CD4-positive, alpha-beta memory T cell (primary cell): ENCODE measurements at regions of chr7 and their contacts with region 1.

Region 1: DNA sequence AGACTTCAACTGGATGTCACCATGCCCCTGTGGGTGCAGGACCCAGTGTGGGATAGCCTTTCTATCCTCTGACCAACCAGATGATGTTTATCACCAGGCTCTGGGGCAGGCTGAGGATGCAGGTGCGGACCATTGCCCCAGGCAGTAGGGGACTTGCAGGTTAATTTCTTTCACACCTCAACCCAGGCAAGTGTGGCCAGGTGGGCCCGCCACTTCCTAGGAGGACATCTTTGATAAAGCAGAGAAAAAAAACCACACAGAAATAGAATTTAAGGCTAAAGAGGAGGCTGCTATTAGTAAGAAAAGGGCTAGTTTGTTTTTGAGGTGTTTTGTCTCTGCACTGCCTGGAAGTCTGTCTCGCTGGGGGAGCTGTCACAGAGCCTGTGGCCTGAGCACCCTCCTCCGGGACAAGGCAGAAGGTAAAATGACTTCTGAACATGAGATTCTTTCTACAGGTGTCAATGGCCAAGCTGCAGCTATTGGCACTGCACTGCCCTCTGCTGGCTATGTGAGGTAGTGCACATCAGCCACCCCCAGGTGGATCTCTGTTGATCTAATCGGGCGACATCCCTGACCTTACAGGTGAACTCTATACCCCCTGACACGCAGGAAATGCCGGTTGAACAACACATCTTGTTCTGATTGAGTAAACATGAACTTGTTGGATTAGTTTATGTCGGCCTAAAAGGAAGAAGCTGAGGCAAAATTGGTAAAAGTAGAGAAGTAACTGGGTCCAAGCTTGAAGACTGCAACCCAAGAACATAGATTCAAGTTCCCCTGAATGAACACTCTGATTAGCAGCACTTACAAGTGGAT is 21.0 kb downstream of the UPP1 start:
- DNase-seq: peak; percentile 81 to 86 (median 84)
- H3K4me3 ChIP-seq: no peak overlapping the region
- H3K4me3 Mint-ChIP-seq: peak overlapping the region in 2 of 8 donors; percentile 2 to 13
- H3K27ac ChIP-seq: no peak overlapping the region
- H3K27ac Mint-ChIP-seq: peak overlapping the region; percentile 57 to 90 (median 85)
- H3K4me1 ChIP-seq: peaks cover 13% of the 10 kb centered on the region
- H3K4me1 Mint-ChIP-seq: peaks cover 8 to 16% (median 11%) of the 10 kb centered on the region in 4 donors
- H3K27me3 ChIP-seq: no peaks in the 10 kb centered on the region
- H3K27me3 Mint-ChIP-seq: no peaks in the 10 kb centered on the region

Region 2: DNA sequence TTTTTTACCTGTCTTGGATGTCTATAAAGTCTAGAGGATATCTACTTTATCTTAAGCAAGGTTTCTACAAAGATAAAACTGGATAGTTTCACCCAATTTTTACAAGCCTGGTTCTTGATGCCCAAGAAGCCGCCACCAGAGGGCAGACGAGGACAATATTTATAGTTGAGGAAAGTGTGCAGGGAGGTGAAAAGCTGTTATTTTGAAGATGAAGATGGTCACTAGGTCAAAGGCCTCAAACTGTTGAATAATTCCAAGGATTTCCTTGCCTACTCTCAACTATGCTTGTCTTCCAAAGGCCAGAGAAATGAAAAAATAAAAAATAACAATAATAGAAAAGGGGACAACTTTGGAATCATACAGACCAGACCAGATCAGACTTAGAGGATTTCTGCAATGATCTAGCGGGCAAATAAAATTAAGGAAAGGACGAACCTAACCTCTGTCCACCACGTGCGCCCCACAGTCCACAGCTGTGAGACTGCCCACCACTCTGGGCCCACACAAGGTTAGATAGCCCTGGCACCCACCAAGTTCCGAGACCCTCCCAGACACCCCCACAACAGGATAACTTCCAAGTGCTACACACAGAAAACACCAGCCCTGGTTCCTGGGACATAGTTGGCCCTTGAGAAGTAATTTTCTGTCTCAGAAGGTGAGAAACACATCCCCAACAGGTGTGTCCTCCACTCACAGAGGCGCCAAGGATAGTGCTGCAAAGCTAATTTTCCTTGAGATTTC is 164.6 kb before region 1 on chr7:
- CTCF ChIA-PET with region 1: interaction called, 94 read pairs
- POLR2A ChIA-PET with region 1: interaction called, 3 read pairs
- intact Hi-C with region 1: loop called (anchors 1 kb)
- DNase-seq: peak; percentile 53 to 62 (median 61)
- H3K4me3 ChIP-seq: no peak overlapping the region
- H3K4me3 Mint-ChIP-seq: no peak overlapping the region
- H3K27ac ChIP-seq: no peak overlapping the region
- H3K27ac Mint-ChIP-seq: no peak overlapping the region
- H3K4me1 ChIP-seq: no peaks in the 10 kb centered on the region
- H3K4me1 Mint-ChIP-seq: peaks cover 0 to 3% (median 0%) of the 10 kb centered on the region in 4 donors
- H3K27me3 ChIP-seq: no peaks in the 10 kb centered on the region
- H3K27me3 Mint-ChIP-seq: no peaks in the 10 kb centered on the region

Region 3: DNA sequence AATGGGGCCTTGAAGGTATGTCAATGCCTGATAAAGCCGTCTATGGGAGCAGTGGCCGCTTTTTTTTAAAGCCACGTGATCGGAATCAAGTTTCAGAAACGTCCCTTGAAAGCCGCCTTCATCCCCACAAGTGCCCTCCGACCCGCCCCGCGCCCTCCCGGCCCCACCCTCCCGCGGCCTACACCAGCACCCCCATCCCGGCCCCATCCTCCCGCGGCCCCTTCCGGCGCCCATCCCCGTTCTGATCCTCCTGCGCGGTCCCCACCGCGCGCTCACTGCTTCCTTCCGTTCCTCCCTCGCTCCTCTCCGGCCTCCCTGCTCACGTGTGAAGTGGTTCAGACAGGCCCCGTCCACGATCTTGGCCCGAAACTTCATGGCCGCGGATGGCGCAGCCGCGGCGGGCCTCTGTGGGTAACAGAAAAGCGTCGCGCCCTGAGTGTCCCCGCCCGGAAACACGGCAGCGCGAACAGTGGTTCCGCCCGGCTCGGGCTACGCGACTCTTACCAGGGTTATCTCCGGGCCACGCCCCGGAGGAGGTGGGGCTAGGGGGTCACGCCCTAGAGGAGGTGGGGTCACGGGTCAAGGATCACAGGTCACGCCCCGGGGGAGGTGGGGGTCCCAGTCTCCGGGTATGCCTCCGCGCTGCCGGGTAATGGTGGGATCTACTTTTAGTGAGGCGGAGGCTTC is 130.8 kb before region 1 on chr7 and contains the start of gene HUS1:
- CTCF ChIA-PET with region 1: interaction called, 12 read pairs
- POLR2A ChIA-PET with region 1: interaction called, 3 read pairs
- intact Hi-C with region 1: loop called (anchors 1 kb)
- DNase-seq: peak; percentile 89 to 94 (median 90)
- H3K4me3 ChIP-seq: peak within 1 kb of the TSS; percentile 72 to 81
- H3K4me3 Mint-ChIP-seq: peak within 1 kb of the TSS; percentile 92 to 99 (median 95)
- H3K27ac ChIP-seq: peak within 1 kb of the TSS; percentile 83
- H3K27ac Mint-ChIP-seq: peak within 1 kb of the TSS; percentile 97 to 100 (median 98)
- H3K4me1 ChIP-seq: peaks cover 23% of the 10 kb centered on the region
- H3K4me1 Mint-ChIP-seq: peaks cover 14 to 32% (median 24%) of the 10 kb centered on the region in 4 donors
- H3K27me3 ChIP-seq: no peaks in the 10 kb centered on the region
- H3K27me3 Mint-ChIP-seq: no peaks in the 10 kb centered on the region
- total RNA-seq, gene HUS1: 72.5 to 74.1 TPM

Region 4: GRCh38 chr7:48006866-48007265 is 103.2 kb before region 1 on chr7:
- CTCF ChIA-PET with region 1: no interaction called
- POLR2A ChIA-PET with region 1: no interaction called
- intact Hi-C with region 1: no loop called
- DNase-seq: no peak
- H3K4me3 ChIP-seq: no peak overlapping the region
- H3K4me3 Mint-ChIP-seq: no peak overlapping the region
- H3K27ac ChIP-seq: no peak overlapping the region
- H3K27ac Mint-ChIP-seq: no peak overlapping the region
- H3K4me1 ChIP-seq: no peaks in the 10 kb centered on the region
- H3K4me1 Mint-ChIP-seq: no peaks in the 10 kb centered on the region
- H3K27me3 ChIP-seq: no peaks in the 10 kb centered on the region
- H3K27me3 Mint-ChIP-seq: peaks cover 5 to 10% of the 10 kb centered on the region in 2 donors

Region 5: GRCh38 chr7:48035301-48035966 is 74.6 kb before region 1 on chr7 and contains the start of gene C7orf57:
- CTCF ChIA-PET with region 1: interaction called, 4 read pairs
- POLR2A ChIA-PET with region 1: no interaction called
- intact Hi-C with region 1: loop called (anchors 1 kb)
- DNase-seq: peak; percentile 83 to 88 (median 86)
- H3K4me3 ChIP-seq: peak within 1 kb of the TSS; percentile 68 to 69
- H3K4me3 Mint-ChIP-seq: peak within 1 kb of the TSS; percentile 78 to 94 (median 88)
- H3K27ac ChIP-seq: peak within 1 kb of the TSS; percentile 11
- H3K27ac Mint-ChIP-seq: peak within 1 kb of the TSS; percentile 43 to 96 (median 88)
- H3K4me1 ChIP-seq: peaks cover 7% of the 10 kb centered on the region
- H3K4me1 Mint-ChIP-seq: peaks cover 4 to 11% (median 8%) of the 10 kb centered on the region in 4 donors
- H3K27me3 ChIP-seq: no peaks in the 10 kb centered on the region
- H3K27me3 Mint-ChIP-seq: peaks cover 6 to 12% of the 10 kb centered on the region in 2 donors
- total RNA-seq, gene C7orf57: not detected

Region 6: DNA sequence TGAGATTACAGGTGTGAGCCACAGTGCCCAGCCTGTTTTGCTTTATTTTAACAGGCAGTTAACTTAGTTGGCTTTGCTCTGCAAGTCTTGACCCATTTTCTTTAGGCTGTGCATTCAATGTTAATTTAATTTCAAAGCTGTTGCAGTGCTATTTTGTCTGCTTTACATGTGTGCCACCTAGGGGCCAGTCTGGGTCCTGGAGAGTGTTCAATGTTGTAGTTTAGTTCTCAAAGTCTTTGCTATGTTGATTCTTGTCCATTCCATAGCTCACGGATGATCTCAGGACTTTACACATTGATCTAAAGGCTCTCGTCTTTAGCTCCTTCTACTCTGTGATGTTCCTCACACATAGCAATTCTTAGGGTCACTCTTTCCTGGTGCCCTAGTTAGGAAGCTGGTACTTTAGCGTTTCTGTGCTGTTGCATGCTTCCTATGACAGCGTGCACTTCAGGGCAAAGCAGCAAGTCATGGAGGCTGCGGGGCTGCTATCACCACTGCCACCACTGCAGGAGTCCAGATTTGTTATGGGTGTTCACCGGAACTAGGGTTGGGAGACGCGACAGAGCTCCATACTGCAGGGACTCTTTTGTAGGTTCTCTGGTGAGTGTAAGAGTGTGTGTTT is 44.8 kb after region 1 on chr7:
- CTCF ChIA-PET with region 1: interaction called, 4 read pairs
- POLR2A ChIA-PET with region 1: no interaction called
- intact Hi-C with region 1: loop called (anchors 1 kb)
- DNase-seq: peak; percentile 24 to 42 (median 30)
- H3K4me3 ChIP-seq: no peak overlapping the region
- H3K4me3 Mint-ChIP-seq: no peak overlapping the region
- H3K27ac ChIP-seq: no peak overlapping the region
- H3K27ac Mint-ChIP-seq: no peak overlapping the region
- H3K4me1 ChIP-seq: no peaks in the 10 kb centered on the region
- H3K4me1 Mint-ChIP-seq: no peaks in the 10 kb centered on the region
- H3K27me3 ChIP-seq: no peaks in the 10 kb centered on the region
- H3K27me3 Mint-ChIP-seq: peaks cover 11 to 26% of the 10 kb centered on the region in 2 donors

Region 7: GRCh38 chr7:48168159-48168558 is 58.1 kb after region 1 on chr7:
- CTCF ChIA-PET with region 1: no interaction called
- POLR2A ChIA-PET with region 1: no interaction called
- intact Hi-C with region 1: no loop called
- DNase-seq: no peak
- H3K4me3 ChIP-seq: no peak overlapping the region
- H3K4me3 Mint-ChIP-seq: no peak overlapping the region
- H3K27ac ChIP-seq: no peak overlapping the region
- H3K27ac Mint-ChIP-seq: no peak overlapping the region
- H3K4me1 ChIP-seq: no peaks in the 10 kb centered on the region
- H3K4me1 Mint-ChIP-seq: no peaks in the 10 kb centered on the region
- H3K27me3 ChIP-seq: no peaks in the 10 kb centered on the region
- H3K27me3 Mint-ChIP-seq: peaks cover 5 to 16% of the 10 kb centered on the region in 2 donors

Region 8: DNA sequence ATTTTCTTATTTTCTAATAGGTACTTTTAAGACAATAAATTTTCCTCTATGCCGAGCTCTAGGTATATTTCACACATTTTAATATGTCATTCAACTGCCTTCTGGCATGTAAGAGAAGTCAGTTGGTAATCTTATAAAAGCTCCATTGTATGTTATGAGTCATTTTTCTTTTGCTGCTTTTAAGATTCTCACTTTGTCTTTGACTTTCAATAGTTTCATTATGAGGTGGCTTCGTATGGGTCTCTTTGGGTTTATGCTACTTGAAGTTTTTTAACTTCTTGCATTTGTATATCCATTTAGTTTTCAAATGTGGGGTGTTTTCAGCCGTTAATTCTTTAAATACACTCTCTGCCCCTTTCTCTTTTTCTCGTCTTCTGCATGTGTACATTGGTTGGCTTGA is 141.7 kb after region 1 on chr7:
- CTCF ChIA-PET with region 1: no interaction called
- POLR2A ChIA-PET with region 1: no interaction called
- intact Hi-C with region 1: no loop called
- DNase-seq: no peak
- H3K4me3 ChIP-seq: no peak overlapping the region
- H3K4me3 Mint-ChIP-seq: no peak overlapping the region
- H3K27ac ChIP-seq: no peak overlapping the region
- H3K27ac Mint-ChIP-seq: no peak overlapping the region
- H3K4me1 ChIP-seq: no peaks in the 10 kb centered on the region
- H3K4me1 Mint-ChIP-seq: peaks cover 0 to 5% (median 2%) of the 10 kb centered on the region in 4 donors
- H3K27me3 ChIP-seq: no peaks in the 10 kb centered on the region
- H3K27me3 Mint-ChIP-seq: peaks cover under 1 to 3% of the 10 kb centered on the region in 2 donors